ENCODE measurements at regions of chr1 and their contacts with region 1.

Region 1: GRCh38 chr1:6343506-6344405 is 49.8 kb downstream of the ACOT7 start:
- DNase-seq: no peak
- ATAC-seq: peak; percentile 94
- H3K4me3 ChIP-seq: no peak overlapping the region
- H3K27ac ChIP-seq: no peak overlapping the region
- H3K4me1 ChIP-seq: peaks cover 6% of the 10 kb centered on the region; the same call in 1 of the 2 replicates
- H3K27me3 ChIP-seq: no peaks in the 10 kb centered on the region
- CTCF ChIP-seq: peak; percentile 85 to 99 (median 87); a peak in 5 of 6 replicates
- EP300 ChIP-seq: no peak
- POLR2A ChIP-seq: no peak
- RAD21 ChIP-seq: peak; percentile 97

Region 2: GRCh38 chr1:6300342-6301048 is 43.3 kb before region 1 on chr1:
- CTCF ChIA-PET with region 1: no interaction called
- POLR2A ChIA-PET with region 1: no interaction called
- RAD21 ChIA-PET with region 1: no interaction called
- SMC1A ChIA-PET with region 1: no interaction called
- in situ Hi-C with region 1: no loop called
- intact Hi-C with region 1: no loop called
- DNase-seq: no peak
- ATAC-seq: no peak
- H3K4me3 ChIP-seq: no peak overlapping the region
- H3K27ac ChIP-seq: no peak overlapping the region
- H3K4me1 ChIP-seq: peaks cover 4% of the 10 kb centered on the region; the same call in 1 of the 2 replicates
- H3K27me3 ChIP-seq: no peaks in the 10 kb centered on the region
- CTCF ChIP-seq: 0 out of 6 replicates have a peak, but pooled peaks of 1 of the 3 experiments have one; percentile 9
- EP300 ChIP-seq: no peak
- POLR2A ChIP-seq: no peak
- RAD21 ChIP-seq: no peak

Region 3: GRCh38 chr1:6317098-6317760 is 26.5 kb before region 1 on chr1:
- CTCF ChIA-PET with region 1: no interaction called
- POLR2A ChIA-PET with region 1: no interaction called
- RAD21 ChIA-PET with region 1: no interaction called
- SMC1A ChIA-PET with region 1: no interaction called
- in situ Hi-C with region 1: no loop called
- intact Hi-C with region 1: no loop called
- DNase-seq: no peak
- ATAC-seq: no peak
- H3K4me3 ChIP-seq: no peak overlapping the region
- H3K27ac ChIP-seq: no peak overlapping the region
- H3K4me1 ChIP-seq: no peaks in the 10 kb centered on the region
- H3K27me3 ChIP-seq: no peaks in the 10 kb centered on the region
- CTCF ChIP-seq: no peak
- EP300 ChIP-seq: no peak
- POLR2A ChIP-seq: no peak
- RAD21 ChIP-seq: no peak

Region 4: GRCh38 chr1:6393400-6394187 is 49.8 kb after region 1 on chr1 and contains the start of gene ACOT7:
- CTCF ChIA-PET with region 1: interaction called, 56 read pairs
- POLR2A ChIA-PET with region 1: no interaction called
- RAD21 ChIA-PET with region 1: interaction called, 14 read pairs
- SMC1A ChIA-PET with region 1: interaction called, 9 read pairs
- in situ Hi-C with region 1: no loop called
- intact Hi-C with region 1: no loop called
- DNase-seq: peak; percentile 25
- ATAC-seq: peak; percentile 92
- H3K4me3 ChIP-seq: peak within 1 kb of the TSS; percentile 89
- H3K27ac ChIP-seq: peak within 1 kb of the TSS; percentile 61
- H3K4me1 ChIP-seq: peaks cover 9% of the 10 kb centered on the region
- H3K27me3 ChIP-seq: no peaks in the 10 kb centered on the region
- CTCF ChIP-seq: peak in 1 of 3 experiments; percentile 31; a peak in 1 of 6 replicates
- EP300 ChIP-seq: no peak
- POLR2A ChIP-seq: peak; percentile 80
- RAD21 ChIP-seq: no peak
- polyA plus RNA-seq, gene ACOT7: 8.9 to 20.2 TPM

Measured in GM12878 (cell line).